Ascending aorta (tissue), 2 donors: ENCODE measurements at regions of chr16 and their contacts with region 1.

Region 1: GRCh38 chr16:57204675-57205074 is 18.5 kb downstream of the RSPRY1 start:
- DNase-seq: no peak
- H3K4me3 ChIP-seq: no peak overlapping the region
- H3K27ac ChIP-seq: no peak overlapping the region
- H3K4me1 ChIP-seq: no peaks in the 10 kb centered on the region
- H3K27me3 ChIP-seq: no peaks in the 10 kb centered on the region
- CTCF ChIP-seq: no peak

Region 2: DNA sequence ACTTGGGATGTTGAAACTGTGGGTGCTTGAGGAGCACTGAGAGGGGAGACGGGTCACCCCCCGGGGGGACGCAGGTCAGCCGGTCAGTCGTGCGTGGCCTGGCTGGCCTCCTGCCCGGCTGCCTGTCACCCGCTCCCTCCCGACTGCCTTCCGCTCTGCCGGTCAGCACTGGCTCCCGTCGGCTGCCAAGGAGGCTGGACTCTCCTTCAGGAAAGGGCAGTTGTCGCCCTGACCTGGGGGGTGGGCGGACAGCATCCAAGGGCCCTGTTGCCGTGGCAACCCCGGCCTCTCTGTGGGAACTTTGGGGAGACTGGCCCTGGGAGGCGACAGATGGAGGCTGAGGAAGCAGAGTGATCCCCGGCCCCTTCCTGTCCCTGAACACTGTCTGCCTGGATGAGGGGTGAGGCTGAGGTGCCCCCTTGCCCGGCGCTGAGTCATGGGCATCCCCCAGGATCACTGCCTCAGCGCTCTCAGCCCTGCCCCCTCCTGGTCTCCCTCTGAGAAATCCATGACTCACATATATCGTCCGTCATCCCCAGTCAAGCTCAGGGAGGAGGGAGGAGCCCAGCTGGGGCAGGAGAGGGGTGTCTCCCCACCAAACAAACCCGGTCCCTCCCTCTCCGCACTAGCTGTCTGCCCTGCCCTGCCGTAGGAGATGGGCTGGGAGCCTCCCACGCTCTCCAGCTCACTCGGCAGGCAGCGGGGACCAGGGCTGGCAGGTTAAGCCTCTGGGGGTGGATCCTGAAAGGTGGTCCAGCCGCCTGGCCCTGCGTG is 423.5 kb after region 1 on chr16 and contains the start of gene ADGRG1:
- intact Hi-C with region 1: loop called (anchors 5 kb)
- DNase-seq: peak; percentile 43 to 85
- H3K4me3 ChIP-seq: peak within 1 kb of the TSS; percentile 28 to 32
- H3K27ac ChIP-seq: peak within 1 kb of the TSS; percentile 4 to 12
- H3K4me1 ChIP-seq: peaks cover 0 to 5% of the 10 kb centered on the region in 2 donors
- H3K27me3 ChIP-seq: no peaks in the 10 kb centered on the region
- CTCF ChIP-seq: no peak
- total RNA-seq, gene ADGRG1: 343 TPM